ENCODE measurements at regions of chr16 and their contacts with region 1.

Region 1: GRCh38 chr16:50397196-50397595 is 28.4 kb upstream of the BRD7 start:
- DNase-seq: peak; percentile 42
- H3K4me3 Mint-ChIP-seq: no peak overlapping the region
- H3K27ac Mint-ChIP-seq: no peak overlapping the region
- H3K4me1 Mint-ChIP-seq: peaks cover 4% of the 10 kb centered on the region
- H3K27me3 Mint-ChIP-seq: no peaks in the 10 kb centered on the region

Region 2: DNA sequence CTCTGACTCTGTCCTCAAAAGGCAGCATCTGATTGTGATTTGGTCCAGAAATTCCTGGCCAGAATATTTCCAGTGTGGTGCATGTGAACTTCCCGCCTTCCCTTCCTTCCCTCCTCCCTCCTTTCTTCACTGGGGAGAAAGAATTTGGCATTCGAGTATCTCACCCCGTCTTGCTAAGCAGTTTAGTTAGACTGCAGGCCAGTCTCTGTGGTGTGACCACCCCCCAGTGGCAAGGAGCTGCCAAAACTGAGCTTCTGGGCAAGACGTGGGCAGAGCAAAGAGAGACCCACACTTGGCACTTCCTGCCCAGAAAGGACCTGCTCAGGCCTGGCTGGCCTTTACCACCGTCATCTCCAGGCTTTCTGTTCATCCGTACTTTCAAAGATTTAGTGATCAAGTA is 247.5 kb after region 1 on chr16:
- intact Hi-C with region 1: loop called (anchors 10 kb)
- DNase-seq: peak; percentile 73
- H3K4me3 Mint-ChIP-seq: no peak overlapping the region
- H3K27ac Mint-ChIP-seq: no peak overlapping the region
- H3K4me1 Mint-ChIP-seq: no peaks in the 10 kb centered on the region
- H3K27me3 Mint-ChIP-seq: no peaks in the 10 kb centered on the region

Measured in activated CD4-positive, alpha-beta T cell treated with anti-CD3 and anti-CD28 coated beads, Interleukin-2, amount 10 ng/mL, durations not matched to agents 24 days and 14 days (primary cell).